Transverse colon (tissue), 4 donors: ENCODE measurements at regions of chr3 and their contacts with region 1.

Region 1: DNA sequence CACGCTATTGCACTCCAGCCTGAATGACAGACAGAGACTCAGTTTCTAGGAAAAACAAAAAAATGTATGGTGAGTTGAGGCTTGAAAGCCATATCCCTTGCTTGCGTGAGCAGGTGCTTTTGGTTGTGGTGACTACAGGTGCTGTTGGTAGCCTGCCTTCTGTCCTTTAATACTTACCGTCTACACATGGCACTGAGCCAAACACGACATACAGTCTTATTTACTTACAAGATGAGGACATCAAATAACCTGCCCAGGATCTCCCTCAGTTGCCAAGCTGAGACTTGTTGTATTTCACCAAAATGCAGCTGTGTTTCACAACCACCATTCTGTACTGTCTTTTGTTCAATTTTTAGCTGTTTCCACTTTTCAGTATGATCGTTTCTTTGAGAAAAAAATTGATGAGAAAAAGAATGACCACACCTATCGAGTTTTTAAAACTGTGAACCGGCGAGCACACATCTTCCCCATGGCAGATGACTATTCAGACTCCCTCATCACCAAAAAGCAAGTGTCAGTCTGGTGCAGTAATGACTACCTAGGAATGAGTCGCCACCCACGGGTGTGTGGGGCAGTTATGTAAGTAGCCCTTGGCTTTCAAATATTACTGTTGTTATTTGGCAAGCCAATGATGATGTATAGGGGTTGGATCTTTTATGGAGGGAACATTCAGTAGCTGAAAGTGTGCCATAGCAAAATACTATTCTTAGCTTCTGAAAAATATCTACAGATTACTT is 6.5 kb downstream of the ALAS1 start:
- DNase-seq: peak; percentile 37
- H3K4me3 ChIP-seq: no peak overlapping the region
- H3K27ac ChIP-seq: no peak overlapping the region
- H3K4me1 ChIP-seq: peaks cover 2 to 39% (median 10%) of the 10 kb centered on the region in 4 donors
- H3K27me3 ChIP-seq: no peaks in the 10 kb centered on the region
- CTCF ChIP-seq: no peak
- EP300 ChIP-seq: no peak
- POLR2A ChIP-seq: no peak

Region 2: DNA sequence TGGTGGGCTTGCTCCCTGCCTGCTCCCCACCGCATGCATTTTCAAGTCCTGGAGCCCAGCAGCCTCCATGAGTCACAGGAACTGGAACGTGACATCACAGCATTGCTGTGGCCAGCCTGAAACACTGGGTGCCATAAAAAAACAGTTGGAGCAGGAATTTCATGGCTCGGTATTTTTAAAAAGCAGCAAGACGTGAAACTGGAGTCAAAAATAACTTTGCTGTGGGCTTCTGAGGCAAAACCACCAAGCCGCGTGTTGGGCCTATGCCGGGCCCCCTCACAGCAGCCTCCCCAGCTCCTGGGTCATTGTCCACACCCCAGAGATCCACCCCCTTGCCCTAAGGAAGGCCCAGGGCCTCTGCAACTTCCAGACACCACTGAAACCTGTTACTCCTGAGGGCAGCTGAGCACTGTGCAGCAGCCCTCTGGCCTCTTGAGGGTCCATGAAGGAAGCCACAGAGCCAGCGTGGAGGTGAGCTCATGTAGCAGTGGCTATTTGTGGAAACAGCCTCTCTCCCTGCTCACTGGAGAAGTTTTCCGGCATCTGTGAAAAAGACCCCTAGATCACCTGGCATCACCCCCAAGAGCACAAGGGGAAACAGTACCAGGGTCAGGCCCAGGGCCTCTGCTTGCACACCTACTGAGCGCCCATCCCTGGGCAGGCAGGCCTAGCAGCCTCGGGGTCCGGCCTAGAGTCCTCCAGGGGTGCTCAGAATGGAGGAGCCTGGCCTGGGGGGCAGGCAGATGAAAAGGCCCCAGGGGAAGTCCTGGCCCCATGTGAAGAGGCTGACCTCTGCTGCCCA is 114.2 kb before region 1 on chr3:
- in situ Hi-C with region 1: no loop called
- intact Hi-C with region 1: no loop called
- DNase-seq: no peak
- H3K4me3 ChIP-seq: no peak overlapping the region
- H3K27ac ChIP-seq: peak overlapping the region; percentile 28 to 58 (median 37)
- H3K4me1 ChIP-seq: peaks cover 0 to 12% (median 4%) of the 10 kb centered on the region in 4 donors
- H3K27me3 ChIP-seq: no peaks in the 10 kb centered on the region
- CTCF ChIP-seq: no peak
- EP300 ChIP-seq: no peak
- POLR2A ChIP-seq: no peak

Region 3: DNA sequence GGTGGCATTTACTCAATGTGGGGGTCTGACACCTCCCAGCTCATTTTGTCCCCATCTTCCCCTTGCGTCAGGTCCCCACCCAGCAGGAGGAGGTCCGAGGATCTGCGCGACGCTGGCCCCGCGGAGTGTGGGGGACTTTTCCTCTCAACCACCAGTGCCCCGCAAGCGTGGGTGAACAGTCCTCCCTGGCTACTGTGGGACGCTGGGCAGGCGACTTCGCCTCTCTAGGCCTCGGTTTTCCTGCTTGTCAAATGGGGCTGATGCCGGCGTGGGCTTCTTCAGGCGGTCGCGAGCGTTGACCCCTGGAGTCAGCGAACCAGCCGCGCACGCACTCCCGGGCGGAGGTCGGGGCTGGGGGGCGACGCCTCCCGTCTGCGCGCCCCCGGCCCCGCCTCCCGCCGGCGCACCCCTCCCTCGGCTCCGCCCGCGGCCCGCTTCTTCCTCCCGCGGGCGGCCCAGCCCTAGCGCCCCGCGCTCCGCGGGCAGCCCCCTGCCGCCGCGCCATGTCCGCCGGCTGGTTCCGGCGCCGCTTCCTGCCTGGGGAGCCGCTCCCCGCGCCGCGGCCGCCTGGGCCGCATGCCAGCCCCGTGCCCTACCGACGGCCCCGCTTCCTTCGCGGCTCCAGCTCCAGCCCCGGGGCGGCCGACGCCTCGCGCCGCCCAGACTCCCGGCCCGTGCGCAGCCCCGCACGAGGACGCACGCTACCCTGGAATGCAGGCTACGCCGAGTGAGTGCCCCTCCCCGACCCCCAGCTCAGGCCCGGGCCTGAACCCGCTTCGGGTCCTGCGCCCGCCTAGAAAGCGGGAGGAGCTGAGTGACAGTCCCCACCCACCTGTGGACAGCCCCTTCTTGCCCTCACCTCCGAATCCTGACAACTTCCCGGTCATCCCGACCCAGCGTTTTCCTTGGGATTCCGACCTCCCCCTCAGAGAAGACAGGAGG is 41.1 kb after region 1 on chr3 and contains the start of gene PPM1M:
- in situ Hi-C with region 1: no loop called
- intact Hi-C with region 1: loop called (anchors 1 kb)
- DNase-seq: peak; percentile 67
- H3K4me3 ChIP-seq: peak within 1 kb of the TSS; percentile 33 to 62 (median 50)
- H3K27ac ChIP-seq: peak within 1 kb of the TSS; percentile 83 to 92 (median 85)
- H3K4me1 ChIP-seq: peaks cover 0 to 23% (median 11%) of the 10 kb centered on the region in 4 donors
- H3K27me3 ChIP-seq: no peaks in the 10 kb centered on the region
- CTCF ChIP-seq: no peak
- EP300 ChIP-seq: no peak
- POLR2A ChIP-seq: no peak
- total RNA-seq, gene PPM1M: 2.0 to 8.4 (median 6.2) TPM